Tibial artery (tissue), 4 donors: ENCODE measurements at regions of chr1 and their contacts with region 1.

Region 1: GRCh38 chr1:2279210-2279639 is 51.1 kb downstream of the SKI start:
- DNase-seq: peak in 1 of 2 donors; percentile 70
- H3K4me3 ChIP-seq: peak overlapping the region in 1 of 2 donors; percentile 18
- H3K27ac ChIP-seq: peak overlapping the region; percentile 58 to 72
- H3K4me1 ChIP-seq: peaks cover 0 to 80% (median 72%) of the 10 kb centered on the region in 4 donors
- H3K27me3 ChIP-seq: no peaks in the 10 kb centered on the region
- CTCF ChIP-seq: no peak

Region 2: DNA sequence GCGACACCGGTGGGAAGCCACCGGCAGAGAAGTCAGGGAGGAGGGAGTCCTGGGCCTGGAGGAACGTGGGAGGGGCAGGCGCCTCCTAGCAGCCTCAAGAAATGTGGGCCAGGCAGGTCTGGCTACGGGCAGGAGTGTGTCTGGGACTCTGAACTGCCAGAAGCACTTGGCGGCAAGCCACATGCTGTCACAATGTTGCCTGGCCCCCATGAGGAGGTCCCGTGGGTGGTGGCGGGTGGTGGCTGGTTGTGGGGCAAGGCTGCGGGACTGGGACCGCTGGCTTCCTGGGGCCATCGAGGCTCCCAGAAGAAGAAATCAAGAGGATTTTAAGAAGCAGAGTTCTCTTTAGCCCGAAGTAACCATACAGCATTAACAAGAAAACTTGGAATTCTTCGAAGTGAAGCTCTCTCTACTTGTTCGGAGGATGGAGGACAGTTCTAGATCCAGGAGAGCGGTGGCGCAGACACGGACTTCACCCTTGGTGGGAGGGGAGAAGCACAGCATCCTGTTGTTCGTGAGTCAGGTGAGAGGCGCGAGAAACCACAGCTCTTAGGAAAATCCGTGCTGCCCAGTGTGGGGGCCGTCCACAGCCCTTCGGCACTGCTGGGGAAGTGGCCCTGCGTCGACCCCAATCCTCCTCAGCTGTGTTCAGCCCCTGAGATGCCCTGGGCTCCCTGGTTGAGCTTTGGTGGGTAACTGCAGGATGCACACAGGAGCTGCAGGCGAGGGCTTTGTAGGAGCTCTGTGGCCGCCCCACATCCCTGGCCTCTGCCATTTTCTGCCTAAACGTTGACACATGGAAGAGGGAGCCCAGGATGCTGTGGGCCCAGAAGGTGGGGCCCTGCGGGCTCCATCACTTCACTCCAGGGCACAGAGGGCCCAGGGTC is 38.7 kb before region 1 on chr1:
- intact Hi-C with region 1: loop called (anchors 5 kb)
- DNase-seq: peak; percentile 87 to 95
- H3K4me3 ChIP-seq: peak overlapping the region; percentile 33 to 40
- H3K27ac ChIP-seq: peak overlapping the region; percentile 90 to 94
- H3K4me1 ChIP-seq: peaks cover 12 to 93% (median 87%) of the 10 kb centered on the region in 4 donors
- H3K27me3 ChIP-seq: no peaks in the 10 kb centered on the region
- CTCF ChIP-seq: no peak